Sigmoid colon (tissue), 7 donors: ENCODE measurements at regions of chr6 and their contacts with region 1.

Region 1: DNA sequence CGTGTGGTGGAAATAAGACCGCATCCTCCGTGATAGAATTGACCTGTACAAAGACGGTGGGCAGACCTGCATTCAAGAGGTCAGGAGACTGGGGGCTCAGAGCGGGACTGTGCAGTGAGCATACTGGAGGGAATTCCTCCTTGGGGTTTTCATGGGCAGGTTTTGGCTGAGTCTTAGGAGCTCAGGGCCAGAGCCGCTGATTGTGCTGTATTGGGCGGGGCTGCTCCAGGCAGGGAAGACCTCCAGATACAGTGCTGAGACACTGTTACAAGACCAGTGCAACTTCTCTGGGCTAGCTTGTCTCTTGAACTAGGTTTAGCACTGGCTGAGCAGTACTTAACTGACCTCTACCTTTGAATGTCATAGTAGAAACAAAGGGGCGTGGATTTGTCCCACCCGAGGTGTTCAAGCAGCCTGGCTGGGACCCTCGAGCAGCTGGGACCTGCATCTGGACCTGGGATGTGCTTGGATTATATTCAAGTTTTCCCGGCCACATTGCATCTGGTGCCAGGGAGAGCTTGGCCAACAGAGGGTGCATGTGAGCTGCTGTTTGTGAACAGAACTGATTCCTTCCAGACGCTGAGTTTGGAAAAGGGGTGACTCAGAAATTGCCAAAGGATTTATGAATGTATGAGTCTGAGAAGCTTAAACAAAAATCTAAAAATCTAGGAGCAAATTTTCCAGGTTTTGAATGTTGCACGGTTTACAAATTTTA is 33.4 kb upstream of the SLC22A1 start:
- DNase-seq: peak; percentile 86
- H3K4me3 ChIP-seq: no peak overlapping the region
- H3K27ac ChIP-seq: peak overlapping the region; percentile 39 to 75 (median 62)
- H3K4me1 ChIP-seq: peaks cover 0 to 21% (median 12%) of the 10 kb centered on the region in 4 donors
- H3K27me3 ChIP-seq: no peaks in the 10 kb centered on the region
- CTCF ChIP-seq: peak; percentile 57 to 80 (median 70)
- EP300 ChIP-seq: no peak
- POLR2A ChIP-seq: no peak

Region 2: DNA sequence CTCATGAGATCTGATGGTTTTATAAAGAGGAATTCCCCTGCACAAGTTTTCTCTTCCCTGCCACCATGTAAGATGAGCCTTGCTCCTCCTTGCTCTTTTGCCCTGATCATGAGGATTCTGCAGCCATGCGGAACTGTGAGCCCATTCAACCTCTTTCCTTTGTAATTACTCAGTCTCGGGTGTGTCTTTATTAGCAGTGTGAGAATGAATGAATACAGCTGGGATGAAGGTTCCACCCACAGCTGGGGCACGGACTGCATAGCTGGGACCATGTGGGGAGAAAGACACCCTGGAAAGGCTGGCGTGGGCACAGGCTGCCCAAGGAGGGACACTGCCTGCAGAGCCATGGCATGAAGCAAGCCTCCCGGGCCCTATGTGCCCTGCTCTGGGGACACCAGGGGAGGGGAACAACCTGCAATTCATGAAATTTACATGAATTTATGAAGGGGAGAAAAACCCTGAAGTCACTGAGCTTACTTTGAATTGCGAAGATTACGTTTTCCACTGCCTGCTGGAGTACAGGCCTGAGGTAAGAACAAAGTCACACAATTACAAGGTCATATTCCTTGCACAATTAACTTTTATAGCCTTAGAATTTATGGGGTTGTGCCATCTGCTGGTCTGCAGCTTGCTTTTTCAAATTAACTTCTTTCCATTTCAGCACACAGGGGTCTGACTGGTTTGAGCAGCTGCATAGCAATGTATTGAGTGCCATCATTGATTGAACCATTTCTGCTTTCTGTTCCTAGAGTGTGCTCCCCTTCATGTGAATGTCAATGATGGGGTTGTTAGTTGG is 79.6 kb after region 1 on chr6:
- intact Hi-C with region 1: no loop called
- DNase-seq: no peak
- H3K4me3 ChIP-seq: no peak overlapping the region
- H3K27ac ChIP-seq: no peak overlapping the region
- H3K4me1 ChIP-seq: peaks cover 0 to 22% (median 15%) of the 10 kb centered on the region in 4 donors
- H3K27me3 ChIP-seq: no peaks in the 10 kb centered on the region
- CTCF ChIP-seq: no peak
- EP300 ChIP-seq: no peak
- POLR2A ChIP-seq: no peak

Region 3: DNA sequence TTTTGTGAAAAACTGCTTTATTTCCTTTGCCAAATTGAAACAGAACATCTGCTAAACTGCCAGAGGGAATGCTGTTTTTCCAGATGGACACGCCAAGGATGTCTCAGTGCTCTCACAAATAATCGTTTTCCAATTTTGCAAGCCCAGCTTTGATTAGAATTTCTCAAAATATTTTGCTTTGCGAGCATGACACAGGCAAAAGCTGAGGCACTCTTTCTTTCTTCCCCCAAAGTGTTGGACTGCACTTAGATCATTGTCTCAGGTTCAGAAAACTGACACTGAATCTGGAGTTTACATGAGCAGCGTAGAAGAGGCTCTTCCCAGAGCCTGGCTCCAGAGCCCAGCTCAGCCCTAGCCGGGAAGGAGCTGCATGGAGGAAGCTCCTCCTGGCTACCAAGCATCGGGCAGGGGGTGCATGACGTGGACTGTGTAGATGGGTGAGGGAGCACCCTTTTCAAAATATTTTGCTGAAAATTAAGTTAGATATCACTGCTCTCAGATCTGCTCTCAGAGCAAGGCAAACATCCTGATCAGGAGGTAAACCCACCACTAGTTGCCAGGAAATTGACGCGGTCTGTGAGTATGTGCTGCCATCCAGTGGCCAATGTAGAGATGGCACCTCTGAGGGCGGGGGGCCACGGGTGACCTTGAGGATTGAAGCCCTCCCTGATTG is 367.5 kb after region 1 on chr6:
- intact Hi-C with region 1: loop called (anchors 1 kb)
- DNase-seq: peak; percentile 87
- H3K4me3 ChIP-seq: peak overlapping the region in 3 of 4 donors; percentile 4 to 31 (median 27)
- H3K27ac ChIP-seq: peak overlapping the region; percentile 43 to 75 (median 68)
- H3K4me1 ChIP-seq: peaks cover 0 to 15% (median 11%) of the 10 kb centered on the region in 4 donors
- H3K27me3 ChIP-seq: no peaks in the 10 kb centered on the region
- CTCF ChIP-seq: peak; percentile 97 to 99 (median 99)
- EP300 ChIP-seq: no peak
- POLR2A ChIP-seq: no peak

Region 4: DNA sequence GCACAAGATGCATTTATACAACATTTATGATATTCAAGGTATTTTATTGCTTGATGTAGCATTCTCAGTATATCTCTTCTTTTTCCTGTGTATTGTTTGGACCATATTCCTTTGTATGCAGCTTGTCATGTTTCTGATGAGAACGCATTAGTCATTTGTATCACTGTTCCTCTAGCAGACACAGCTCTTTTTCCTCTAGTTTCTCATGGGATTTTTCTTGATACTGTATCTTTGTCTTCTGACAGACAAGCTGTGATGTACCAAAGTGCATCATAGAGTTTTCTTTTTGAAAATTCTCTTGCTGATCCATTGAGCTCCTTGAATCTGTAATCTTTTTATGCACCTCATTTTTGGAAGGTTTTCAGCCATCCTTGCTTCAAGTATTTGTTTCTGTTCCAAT is 400.9 kb after region 1 on chr6:
- intact Hi-C with region 1: no loop called
- DNase-seq: no peak
- H3K4me3 ChIP-seq: no peak overlapping the region
- H3K27ac ChIP-seq: no peak overlapping the region
- H3K4me1 ChIP-seq: no peaks in the 10 kb centered on the region
- H3K27me3 ChIP-seq: no peaks in the 10 kb centered on the region
- CTCF ChIP-seq: no peak
- EP300 ChIP-seq: no peak
- POLR2A ChIP-seq: no peak

Region 5: GRCh38 chr6:160534050-160534696 is 445.9 kb after region 1 on chr6:
- intact Hi-C with region 1: loop called (anchors 10 kb)
- DNase-seq: peak; percentile 70
- H3K4me3 ChIP-seq: peak overlapping the region in 2 of 4 donors; percentile 21 to 22
- H3K27ac ChIP-seq: no peak overlapping the region
- H3K4me1 ChIP-seq: peaks cover 0 to 7% (median 2%) of the 10 kb centered on the region in 4 donors
- H3K27me3 ChIP-seq: no peaks in the 10 kb centered on the region
- CTCF ChIP-seq: peak; percentile 71 to 93 (median 81)
- EP300 ChIP-seq: no peak
- POLR2A ChIP-seq: no peak